ENCODE measurements at regions of chr10 and their contacts with region 1.

Region 1: GRCh38 chr10:23314835-23315239 is 29.8 kb downstream of the C10orf67 start:
- DNase-seq: peak; percentile 45 to 76
- H3K4me3 ChIP-seq: no peak overlapping the region
- H3K27ac ChIP-seq: no peak overlapping the region
- H3K4me1 ChIP-seq: 0 out of 2 replicates have a peak, but pooled peaks cover 5% of the 10 kb centered on the region
- H3K27me3 ChIP-seq: no peaks in the 10 kb centered on the region
- CTCF ChIP-seq: peak; percentile 80

Region 2: DNA sequence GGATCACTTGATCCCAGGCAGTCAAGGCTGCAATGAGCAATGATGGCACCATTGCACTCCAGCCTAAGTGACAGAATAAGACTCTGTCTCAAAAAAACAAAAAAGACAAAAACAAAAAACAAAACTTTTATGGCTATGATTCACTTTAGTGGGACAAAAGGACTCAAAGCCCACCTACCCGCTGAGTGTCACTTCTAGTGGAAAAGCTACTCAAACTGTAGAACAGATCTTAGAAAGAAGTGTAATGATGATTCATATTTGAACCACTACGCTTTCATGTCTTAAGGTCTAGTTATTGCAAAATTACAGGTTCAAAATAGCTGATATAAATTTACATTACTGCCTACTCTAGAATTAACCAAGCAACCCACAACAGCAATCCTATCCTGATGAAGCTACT is 77.0 kb after region 1 on chr10:
- CTCF ChIA-PET with region 1: no interaction called
- POLR2A ChIA-PET with region 1: no interaction called
- intact Hi-C with region 1: no loop called
- DNase-seq: no peak
- H3K4me3 ChIP-seq: no peak overlapping the region
- H3K27ac ChIP-seq: no peak overlapping the region
- H3K4me1 ChIP-seq: no peaks in the 10 kb centered on the region
- H3K27me3 ChIP-seq: no peaks in the 10 kb centered on the region
- CTCF ChIP-seq: no peak

Region 3: GRCh38 chr10:23432166-23432565 is 117.3 kb after region 1 on chr10:
- CTCF ChIA-PET with region 1: no interaction called
- POLR2A ChIA-PET with region 1: interaction called, 10 read pairs
- intact Hi-C with region 1: no loop called
- DNase-seq: peak; percentile 50 to 93
- H3K4me3 ChIP-seq: peak overlapping the region; percentile 30; the same call in 1 of the 2 replicates
- H3K27ac ChIP-seq: peak overlapping the region; percentile 97
- H3K4me1 ChIP-seq: peaks cover 28% of the 10 kb centered on the region
- H3K27me3 ChIP-seq: no peaks in the 10 kb centered on the region
- CTCF ChIP-seq: no peak

Region 4: DNA sequence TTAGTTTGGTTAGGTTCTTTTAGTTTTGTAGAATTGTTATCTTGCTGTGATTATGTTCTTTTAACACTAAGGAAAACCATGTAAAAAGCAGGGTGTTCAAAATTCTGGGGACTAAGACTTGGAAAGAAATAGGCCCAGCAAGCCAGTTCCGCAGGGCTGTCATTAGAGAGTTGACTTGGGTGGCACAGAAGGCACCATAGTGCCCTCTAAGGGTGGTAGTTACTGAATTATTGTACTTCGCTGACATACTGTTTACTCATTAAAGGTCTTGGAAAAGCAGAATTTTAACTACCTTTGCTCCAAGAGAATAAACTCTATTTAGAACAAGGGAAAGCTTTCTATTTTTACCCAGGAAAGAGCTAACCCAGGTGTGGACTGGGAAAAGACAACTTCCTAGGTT is 210.6 kb after region 1 on chr10:
- CTCF ChIA-PET with region 1: no interaction called
- POLR2A ChIA-PET with region 1: no interaction called
- intact Hi-C with region 1: loop called (anchors 1 kb)
- DNase-seq: peak in 1 of 2 experiments; percentile 19
- H3K4me3 ChIP-seq: no peak overlapping the region
- H3K27ac ChIP-seq: no peak overlapping the region
- H3K4me1 ChIP-seq: peaks cover 10% of the 10 kb centered on the region; the same call in 1 of the 2 replicates
- H3K27me3 ChIP-seq: no peaks in the 10 kb centered on the region
- CTCF ChIP-seq: peak; percentile 60

Region 5: GRCh38 chr10:23702977-23703414 is 388.2 kb after region 1 on chr10:
- CTCF ChIA-PET with region 1: no interaction called
- POLR2A ChIA-PET with region 1: no interaction called
- intact Hi-C with region 1: loop called (anchors 1 kb)
- DNase-seq: peak; percentile 38 to 50
- H3K4me3 ChIP-seq: no peak overlapping the region
- H3K27ac ChIP-seq: no peak overlapping the region
- H3K4me1 ChIP-seq: no peaks in the 10 kb centered on the region
- H3K27me3 ChIP-seq: no peaks in the 10 kb centered on the region; the same call in 1 of the 2 replicates
- CTCF ChIP-seq: peak; percentile 79